HCT116 (cell line): ENCODE measurements at regions of chr5 and their contacts with region 1.

Region 1: DNA sequence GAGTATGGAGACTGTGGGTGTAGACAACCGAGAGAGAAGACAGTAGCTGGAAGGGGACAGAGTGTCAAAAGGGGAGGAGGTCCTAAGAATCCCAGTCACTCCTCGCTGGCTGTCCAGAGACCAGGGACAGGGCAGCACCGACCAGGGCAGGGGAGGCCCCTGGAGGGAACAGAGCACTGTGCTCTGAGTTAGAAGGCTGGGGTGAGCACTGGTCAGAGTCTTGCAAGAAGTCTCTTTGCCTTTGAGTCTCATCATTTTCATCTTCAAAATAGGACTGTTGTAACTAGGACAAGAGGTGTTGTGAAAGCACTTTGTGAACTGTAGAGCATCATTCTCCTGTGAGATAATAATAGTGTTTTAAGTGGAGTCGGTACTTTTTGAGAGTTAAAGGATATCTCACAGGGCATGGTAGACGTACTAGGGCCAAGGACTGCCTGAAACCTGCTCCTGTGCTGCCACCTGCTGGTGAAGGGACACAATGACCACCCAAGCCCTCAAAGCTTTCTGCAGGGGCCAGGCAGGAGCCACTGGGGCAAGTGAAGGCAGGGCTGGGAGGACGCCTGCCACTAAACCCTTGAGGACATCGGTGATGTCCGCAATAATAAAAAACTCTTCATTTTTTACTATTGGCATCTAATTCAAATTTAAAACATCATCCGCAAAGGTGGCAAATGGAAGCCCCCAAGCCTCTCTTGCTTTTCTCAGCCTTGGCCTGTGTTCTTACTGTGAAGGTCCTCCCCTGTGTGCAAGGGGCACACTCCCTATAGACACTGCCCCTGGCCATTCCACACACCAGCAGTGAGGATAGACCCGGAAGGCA is 28.2 kb downstream of the SLC6A7 start:
- DNase-seq: peak; percentile 64
- ATAC-seq: peak; percentile 99
- H3K4me3 ChIP-seq: no peak overlapping the region
- H3K27ac ChIP-seq: no peak overlapping the region
- H3K4me1 ChIP-seq: 0 out of 4 replicates have a peak, but pooled peaks cover 0 to 2% of the 10 kb centered on the region in 2 experiments
- H3K27me3 ChIP-seq: no peaks in the 10 kb centered on the region
- CTCF ChIP-seq: peak; percentile 87 to 96 (median 88)
- POLR2A ChIP-seq: no peak
- RAD21 ChIP-seq: peak; percentile 97

Region 2: DNA sequence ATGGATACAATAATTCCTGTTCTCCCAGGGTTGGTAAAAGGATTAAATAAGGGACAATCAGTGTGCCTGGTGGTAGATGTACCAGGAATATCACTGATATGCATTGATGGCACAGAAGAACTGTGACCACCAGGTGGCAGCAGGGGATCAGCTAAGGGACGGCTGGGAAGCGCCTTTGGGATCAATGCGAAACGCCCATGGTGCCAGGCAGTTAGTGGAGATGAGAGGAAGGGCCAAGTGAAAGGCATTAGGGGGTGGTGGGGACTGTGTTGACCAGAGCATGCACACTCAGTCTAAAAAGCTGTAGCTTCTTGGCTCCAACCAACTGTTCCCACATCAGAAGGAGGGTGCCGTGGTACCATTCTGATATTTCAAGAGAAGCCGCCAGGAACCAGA is 581.2 kb before region 1 on chr5:
- CTCF ChIA-PET with region 1: no interaction called
- POLR2A ChIA-PET with region 1: no interaction called
- RAD21 ChIA-PET with region 1: no interaction called
- intact Hi-C with region 1: loop called (anchors 2 kb)
- DNase-seq: peak; percentile 65
- ATAC-seq: peak; percentile 88
- H3K4me3 ChIP-seq: no peak overlapping the region
- H3K27ac ChIP-seq: no peak overlapping the region
- H3K4me1 ChIP-seq: peaks cover 16 to 35% of the 10 kb centered on the region in 2 experiments
- H3K27me3 ChIP-seq: no peaks in the 10 kb centered on the region
- CTCF ChIP-seq: peak; percentile 84 to 97 (median 94)
- POLR2A ChIP-seq: no peak
- RAD21 ChIP-seq: peak; percentile 100

Region 3: DNA sequence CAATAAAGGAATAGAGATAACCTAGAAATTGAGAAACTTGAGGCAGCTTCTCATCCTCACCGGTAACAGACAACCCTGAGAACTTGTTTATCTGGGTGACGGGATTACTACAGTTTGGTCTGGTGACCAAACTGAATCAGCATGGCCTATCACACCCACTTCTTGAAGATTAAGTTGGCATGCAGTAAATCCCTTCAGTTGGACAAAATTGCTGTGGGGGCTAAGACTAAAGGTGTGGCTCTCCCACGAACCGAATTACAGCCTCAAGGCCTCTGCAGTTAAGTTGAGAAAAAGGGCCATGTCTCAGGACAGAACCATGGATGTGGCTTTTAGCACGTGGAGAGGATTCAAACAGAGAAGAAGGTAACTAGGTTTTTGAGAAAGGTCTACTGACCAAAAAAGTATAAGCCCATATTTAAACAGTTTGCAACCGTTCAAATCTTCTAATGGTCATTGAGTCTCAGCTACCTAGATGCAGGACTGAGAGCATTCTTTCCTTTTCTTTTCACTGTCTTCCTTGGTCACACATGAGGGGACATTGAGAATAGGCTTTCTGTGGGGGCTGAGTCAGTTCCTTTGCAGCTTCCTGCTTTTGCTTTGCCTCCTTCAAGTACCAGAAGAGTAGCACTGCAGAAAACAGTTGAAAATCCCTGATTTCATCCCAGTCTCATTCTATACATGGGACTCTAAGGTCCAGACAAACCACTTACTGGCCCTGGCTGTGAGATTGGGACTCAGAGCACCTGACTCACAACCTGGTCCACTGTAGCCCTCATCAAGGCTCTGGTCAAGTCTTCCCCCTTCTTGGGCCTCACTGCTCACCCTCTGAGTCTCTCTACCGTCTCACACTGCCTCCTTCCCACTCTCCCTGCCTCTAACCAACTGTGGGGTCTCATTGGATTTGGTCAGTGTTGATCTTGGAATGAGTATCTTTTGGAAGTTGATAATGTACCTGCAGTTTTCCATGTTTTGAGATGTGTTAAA is 304.4 kb before region 1 on chr5:
- CTCF ChIA-PET with region 1: no interaction called
- POLR2A ChIA-PET with region 1: no interaction called
- RAD21 ChIA-PET with region 1: no interaction called
- intact Hi-C with region 1: no loop called
- DNase-seq: no peak
- ATAC-seq: no peak
- H3K4me3 ChIP-seq: no peak overlapping the region
- H3K27ac ChIP-seq: no peak overlapping the region
- H3K4me1 ChIP-seq: no peaks in the 10 kb centered on the region
- H3K27me3 ChIP-seq: peaks cover 4% of the 10 kb centered on the region; the same call in 1 of the 2 replicates
- CTCF ChIP-seq: no peak
- POLR2A ChIP-seq: no peak
- RAD21 ChIP-seq: no peak

Region 4: GRCh38 chr5:150000256-150000989 is 217.7 kb before region 1 on chr5 and contains the starts of genes HMGXB3 and TIGD6:
- CTCF ChIA-PET with region 1: no interaction called
- POLR2A ChIA-PET with region 1: no interaction called
- RAD21 ChIA-PET with region 1: no interaction called
- intact Hi-C with region 1: loop called (anchors 10 kb)
- DNase-seq: peak; percentile 91
- ATAC-seq: peak; percentile 91
- H3K4me3 ChIP-seq: peak within 1 kb of the TSS; percentile 95 to 98
- H3K27ac ChIP-seq: peak within 1 kb of the TSS; percentile 87
- H3K4me1 ChIP-seq: peaks cover 9 to 26% of the 10 kb centered on the region in 2 experiments; a peak in 3 of 4 replicates
- H3K27me3 ChIP-seq: no peaks in the 10 kb centered on the region
- CTCF ChIP-seq: no peak
- POLR2A ChIP-seq: no peak
- RAD21 ChIP-seq: no peak
- total RNA-seq, gene HMGXB3: 41.8 TPM
- total RNA-seq, gene TIGD6: 2.1 TPM

Region 5: DNA sequence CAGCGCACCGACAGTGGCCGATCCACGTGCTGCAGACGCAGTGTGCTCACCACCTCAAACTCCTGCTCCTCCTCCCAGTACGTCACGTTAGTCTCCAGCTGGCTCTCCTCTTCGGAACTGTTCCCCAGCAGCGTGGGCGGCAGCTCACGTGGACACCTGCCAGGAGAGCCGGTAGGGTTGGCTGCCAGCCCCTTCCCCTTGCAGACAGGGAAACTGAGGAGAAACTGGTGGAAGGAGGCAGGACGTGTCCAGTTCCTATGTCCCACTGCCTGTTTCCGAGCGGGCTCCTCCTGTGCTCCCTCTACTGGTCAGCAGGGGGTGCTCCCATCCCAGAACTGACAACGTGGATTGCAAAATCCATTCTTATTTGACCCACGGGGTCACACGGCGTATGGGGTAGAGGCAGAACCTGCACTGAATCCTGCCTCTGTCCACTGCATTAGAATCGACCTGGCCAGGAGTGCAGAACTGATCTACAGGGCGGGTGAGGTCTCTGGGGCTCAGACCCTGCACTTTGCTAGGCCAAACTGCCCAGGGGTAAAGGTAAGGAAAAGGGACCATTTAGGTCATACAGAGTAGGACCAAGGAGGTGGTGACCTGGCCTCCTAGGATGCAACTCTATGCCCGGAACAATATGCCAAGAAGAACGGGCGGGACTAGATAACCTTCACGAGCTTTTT is 88.1 kb before region 1 on chr5:
- CTCF ChIA-PET with region 1: interaction called, 3 read pairs
- POLR2A ChIA-PET with region 1: no interaction called
- RAD21 ChIA-PET with region 1: no interaction called
- intact Hi-C with region 1: loop called (anchors 1 kb)
- DNase-seq: peak; percentile 43
- ATAC-seq: peak; percentile 96
- H3K4me3 ChIP-seq: peak overlapping the region in 1 of 2 experiments; percentile 25; a peak in 1 of 4 replicates
- H3K27ac ChIP-seq: no peak overlapping the region
- H3K4me1 ChIP-seq: peaks cover 0 to 9% of the 10 kb centered on the region in 2 experiments; a peak in 1 of 4 replicates
- H3K27me3 ChIP-seq: no peaks in the 10 kb centered on the region
- CTCF ChIP-seq: peak; percentile 91 to 94 (median 94)
- POLR2A ChIP-seq: no peak
- RAD21 ChIP-seq: peak; percentile 97

Region 6: GRCh38 chr5:150350524-150351344 is 132.7 kb after region 1 on chr5:
- CTCF ChIA-PET with region 1: interaction called, 3 read pairs
- POLR2A ChIA-PET with region 1: no interaction called
- RAD21 ChIA-PET with region 1: no interaction called
- intact Hi-C with region 1: loop called (anchors 1 kb)
- DNase-seq: peak; percentile 76
- ATAC-seq: peak; percentile 97
- H3K4me3 ChIP-seq: no peak overlapping the region
- H3K27ac ChIP-seq: no peak overlapping the region
- H3K4me1 ChIP-seq: peaks cover 3 to 11% of the 10 kb centered on the region in 2 experiments; a peak in 2 of 4 replicates
- H3K27me3 ChIP-seq: no peaks in the 10 kb centered on the region
- CTCF ChIP-seq: peak; percentile 59 to 97 (median 75)
- POLR2A ChIP-seq: no peak
- RAD21 ChIP-seq: peak; percentile 98